Activated naive CD8-positive, alpha-beta T cell treated with anti-CD3 and anti-CD28 coated beads, Interleukin-2, amount 10 ng/mL, durations not matched to agents 7 days and 5 days (primary cell): ENCODE measurements at regions of chr20 and their contacts with region 1.

Region 1: DNA sequence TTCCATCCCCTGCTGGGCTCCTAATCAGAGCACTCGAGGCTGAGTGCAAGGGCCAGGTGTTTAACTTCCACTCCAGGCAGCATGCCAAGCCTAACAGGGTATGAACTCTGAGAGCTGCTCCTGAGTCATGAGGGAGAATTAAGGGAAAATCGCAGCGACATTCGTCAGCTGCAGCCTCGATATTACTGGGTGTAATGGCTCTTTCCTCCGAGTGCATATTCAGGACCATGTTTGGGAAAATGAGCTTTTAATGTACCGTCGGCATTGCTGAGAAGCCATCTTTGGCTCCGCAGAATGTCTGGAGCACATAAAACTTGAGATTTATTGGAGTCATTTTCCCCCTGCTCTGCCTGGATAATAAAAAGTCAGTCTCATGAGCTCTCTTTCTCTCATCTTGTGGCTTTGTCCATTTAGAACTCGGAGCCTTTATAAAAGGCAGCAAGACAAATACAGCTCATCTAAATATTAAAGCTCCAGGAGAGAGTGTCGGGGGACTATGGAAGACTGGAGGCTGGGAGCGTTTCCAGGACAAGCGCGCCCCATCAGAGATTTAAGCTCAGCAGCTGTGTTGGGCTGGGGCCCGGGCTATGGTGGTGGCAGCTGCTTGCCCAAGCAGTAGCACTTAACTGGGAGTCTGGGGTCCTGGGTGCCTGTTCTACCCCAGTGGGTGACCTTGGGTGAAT is 103.7 kb downstream of the TOX2 start:
- DNase-seq: no peak
- ATAC-seq: no peak
- H3K4me3 Mint-ChIP-seq: no peak overlapping the region
- H3K27ac Mint-ChIP-seq: no peak overlapping the region
- H3K4me1 Mint-ChIP-seq: peaks cover 45% of the 10 kb centered on the region
- H3K27me3 Mint-ChIP-seq: peaks cover 49% of the 10 kb centered on the region

Region 2: DNA sequence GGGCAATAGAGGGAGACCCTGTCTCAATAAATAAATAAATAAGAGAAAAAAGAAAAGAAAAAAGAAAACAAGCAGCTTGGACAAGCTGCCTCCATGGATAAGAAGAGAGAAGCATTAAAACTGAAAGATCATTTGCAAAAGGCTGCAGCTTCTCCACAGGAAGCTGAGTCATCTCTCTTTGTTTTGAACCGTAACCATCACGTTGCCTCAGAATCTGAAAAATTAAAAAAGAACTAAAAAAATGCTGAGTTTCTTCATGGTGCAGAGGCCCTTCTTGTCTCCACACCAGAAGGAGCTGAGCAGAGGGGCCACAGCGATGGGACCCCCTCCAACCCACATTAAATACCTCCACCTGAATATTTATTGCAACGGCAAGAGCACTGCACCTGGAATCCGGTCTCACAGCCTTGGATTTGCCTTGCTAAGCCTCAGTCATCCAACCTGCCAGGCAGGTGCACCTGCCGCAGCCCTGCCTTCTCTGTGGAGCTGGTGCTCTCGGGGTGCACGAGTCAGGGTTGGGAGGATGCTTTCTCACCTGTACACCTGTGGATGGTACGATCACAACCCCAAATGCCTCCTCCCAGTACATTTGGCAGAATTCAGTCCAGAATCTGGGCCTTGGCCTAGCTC is 75.6 kb before region 1 on chr20:
- POLR2A ChIA-PET with region 1: interaction called, 10 read pairs
- DNase-seq: no peak
- ATAC-seq: peak; percentile 74
- H3K4me3 Mint-ChIP-seq: peak overlapping the region; percentile 55
- H3K27ac Mint-ChIP-seq: peak overlapping the region; percentile 67
- H3K4me1 Mint-ChIP-seq: peaks cover 44% of the 10 kb centered on the region
- H3K27me3 Mint-ChIP-seq: peaks cover 36% of the 10 kb centered on the region

Region 3: GRCh38 chr20:44028868-44029847 is 10.8 kb after region 1 on chr20:
- POLR2A ChIA-PET with region 1: interaction called, 15 read pairs
- DNase-seq: peak; percentile 62
- ATAC-seq: peak; percentile 90
- H3K4me3 Mint-ChIP-seq: peak overlapping the region; percentile 84
- H3K27ac Mint-ChIP-seq: peak overlapping the region; percentile 94
- H3K4me1 Mint-ChIP-seq: peaks cover 55% of the 10 kb centered on the region
- H3K27me3 Mint-ChIP-seq: peaks cover 39% of the 10 kb centered on the region